B cell (primary cell): ENCODE measurements at regions of chr14 and their contacts with region 1.

Region 1: DNA sequence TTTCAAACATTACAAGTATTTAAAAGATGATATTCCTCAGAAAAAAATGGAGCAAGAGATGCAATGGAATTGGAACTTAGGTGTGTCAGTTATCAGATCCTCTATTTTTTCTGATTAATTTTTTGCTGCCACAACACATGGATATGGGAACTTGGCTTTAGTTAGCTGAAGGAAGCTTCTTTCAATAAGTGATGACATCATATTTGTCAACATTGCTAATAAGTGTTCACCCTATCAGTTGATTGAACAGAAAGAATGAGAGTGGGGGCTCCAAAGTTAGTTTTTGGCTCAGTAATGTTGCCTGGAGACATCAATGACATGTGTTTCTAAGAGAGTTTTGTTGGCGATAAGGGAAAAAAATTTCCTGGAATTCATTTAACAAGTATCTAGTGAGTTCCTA is 373.6 kb upstream of the SEL1L start:
- DNase-seq: no peak
- ATAC-seq: no peak
- H3K4me3 ChIP-seq: no peak overlapping the region
- H3K4me3 Mint-ChIP-seq: no peak overlapping the region
- H3K27ac ChIP-seq: no peak overlapping the region
- H3K27ac Mint-ChIP-seq: no peak overlapping the region
- H3K4me1 ChIP-seq: no peaks in the 10 kb centered on the region
- H3K4me1 Mint-ChIP-seq: no peaks in the 10 kb centered on the region
- H3K27me3 ChIP-seq: no peaks in the 10 kb centered on the region
- H3K27me3 Mint-ChIP-seq: no peaks in the 10 kb centered on the region
- CTCF ChIP-seq: no peak

Region 2: GRCh38 chr14:81765651-81766275 is 141.5 kb before region 1 on chr14:
- CTCF ChIA-PET with region 1: no interaction called
- POLR2A ChIA-PET with region 1: no interaction called
- intact Hi-C with region 1: no loop called
- DNase-seq: no peak
- ATAC-seq: no peak
- H3K4me3 ChIP-seq: no peak overlapping the region
- H3K4me3 Mint-ChIP-seq: no peak overlapping the region
- H3K27ac ChIP-seq: no peak overlapping the region
- H3K27ac Mint-ChIP-seq: no peak overlapping the region
- H3K4me1 ChIP-seq: no peaks in the 10 kb centered on the region
- H3K4me1 Mint-ChIP-seq: no peaks in the 10 kb centered on the region
- H3K27me3 ChIP-seq: no peaks in the 10 kb centered on the region
- H3K27me3 Mint-ChIP-seq: no peaks in the 10 kb centered on the region
- CTCF ChIP-seq: no peak

Region 3: GRCh38 chr14:82244791-82245190 is 337.5 kb after region 1 on chr14:
- CTCF ChIA-PET with region 1: no interaction called
- POLR2A ChIA-PET with region 1: no interaction called
- intact Hi-C with region 1: loop called (anchors 5 kb)
- DNase-seq: no peak
- ATAC-seq: no peak
- H3K4me3 ChIP-seq: no peak overlapping the region
- H3K4me3 Mint-ChIP-seq: no peak overlapping the region
- H3K27ac ChIP-seq: no peak overlapping the region
- H3K27ac Mint-ChIP-seq: no peak overlapping the region
- H3K4me1 ChIP-seq: no peaks in the 10 kb centered on the region
- H3K4me1 Mint-ChIP-seq: no peaks in the 10 kb centered on the region
- H3K27me3 ChIP-seq: no peaks in the 10 kb centered on the region
- H3K27me3 Mint-ChIP-seq: no peaks in the 10 kb centered on the region
- CTCF ChIP-seq: no peak